Keratinocyte (primary cell): ENCODE measurements at regions of chr5 and their contacts with region 1.

Region 1: GRCh38 chr5:143824851-143825720 is 13.1 kb downstream of the HMHB1 start:
- DNase-seq: peak; percentile 48
- H3K4me3 ChIP-seq: no peak overlapping the region
- H3K27ac ChIP-seq: no peak overlapping the region
- H3K4me1 ChIP-seq: no peaks in the 10 kb centered on the region
- H3K27me3 ChIP-seq: no peaks in the 10 kb centered on the region
- CTCF ChIP-seq: peak; percentile 91 to 98 (median 94)

Region 2: GRCh38 chr5:143456952-143457547 is 368.0 kb before region 1 on chr5:
- dilution Hi-C with region 1: no loop called
- DNase-seq: no peak
- H3K4me3 ChIP-seq: no peak overlapping the region
- H3K27ac ChIP-seq: no peak overlapping the region
- H3K4me1 ChIP-seq: peaks cover 8% of the 10 kb centered on the region
- H3K27me3 ChIP-seq: no peaks in the 10 kb centered on the region
- CTCF ChIP-seq: no peak

Region 3: GRCh38 chr5:143738417-143739401 is 86.4 kb before region 1 on chr5:
- dilution Hi-C with region 1: no loop called
- DNase-seq: no peak
- H3K4me3 ChIP-seq: no peak overlapping the region
- H3K27ac ChIP-seq: no peak overlapping the region
- H3K4me1 ChIP-seq: no peaks in the 10 kb centered on the region
- H3K27me3 ChIP-seq: no peaks in the 10 kb centered on the region
- CTCF ChIP-seq: no peak

Region 4: DNA sequence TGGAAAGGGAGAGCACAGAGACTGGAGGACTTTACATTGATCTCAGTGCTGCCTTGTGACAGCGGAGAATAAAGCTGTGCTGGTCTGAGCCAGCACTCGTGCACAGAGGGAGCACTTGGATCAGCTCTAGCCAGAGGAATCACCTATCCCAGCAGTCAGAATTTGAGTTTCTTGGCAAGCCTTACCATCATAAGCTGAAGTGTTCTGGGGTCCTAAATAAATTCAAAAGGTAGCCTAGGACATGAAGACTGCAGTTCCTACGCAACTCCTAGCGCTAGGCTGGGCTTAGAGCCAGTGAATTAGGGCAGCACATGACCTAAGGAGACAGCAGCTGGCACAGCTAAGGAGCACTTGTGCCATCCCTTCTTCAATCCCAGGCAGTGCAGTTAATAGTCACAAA is 106.4 kb after region 1 on chr5:
- dilution Hi-C with region 1: loop called (anchors 25 kb)
- DNase-seq: no peak
- H3K4me3 ChIP-seq: no peak overlapping the region
- H3K27ac ChIP-seq: no peak overlapping the region
- H3K4me1 ChIP-seq: peaks cover 22% of the 10 kb centered on the region
- H3K27me3 ChIP-seq: no peaks in the 10 kb centered on the region
- CTCF ChIP-seq: no peak